ENCODE measurements at regions of chr3 and their contacts with region 1.

Region 1: DNA sequence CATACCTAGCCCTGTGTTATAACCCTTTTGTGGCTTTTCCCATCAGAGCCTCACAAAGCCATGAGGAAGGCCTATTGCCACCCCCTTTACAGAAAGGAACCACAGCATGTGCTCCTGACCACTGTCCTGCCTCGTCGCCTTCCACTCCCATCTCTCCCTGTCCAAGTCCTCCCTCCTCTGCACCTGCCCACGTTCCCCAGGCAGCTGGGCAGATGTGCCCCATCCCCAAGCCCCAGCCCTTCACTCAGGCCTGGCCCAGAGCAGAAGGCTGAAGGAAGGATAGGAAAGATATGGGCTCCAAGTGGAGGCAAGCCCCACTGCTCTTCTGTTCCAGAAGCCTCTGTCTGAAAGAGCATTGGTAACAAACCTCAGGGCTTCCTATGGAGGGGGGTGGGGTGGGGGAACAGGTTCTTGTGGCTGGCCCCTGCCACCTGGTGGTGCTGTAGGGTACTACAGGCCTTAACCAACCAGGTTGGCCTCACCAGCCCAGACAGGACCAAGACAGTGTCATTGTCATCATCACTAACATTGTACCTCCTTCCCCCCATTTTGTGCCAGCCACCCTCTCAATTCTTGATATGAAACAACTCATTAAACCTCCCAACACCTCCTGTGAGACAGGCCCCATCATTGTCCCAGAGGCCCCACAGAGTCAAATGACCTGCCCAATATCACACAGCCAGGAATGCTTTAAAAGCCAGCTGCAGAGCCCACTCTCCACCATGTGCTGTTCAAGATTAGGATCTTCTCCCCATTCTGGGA is 10.0 kb downstream of the POC1A start:
- DNase-seq: peak; percentile 70 to 88 (median 82)
- ATAC-seq: peak; percentile 98
- H3K4me3 ChIP-seq: no peak overlapping the region
- H3K4me3 Mint-ChIP-seq: peak overlapping the region in 1 of 10 donors; percentile 6
- H3K27ac ChIP-seq: no peak overlapping the region
- H3K27ac Mint-ChIP-seq: peak overlapping the region in 5 of 9 donors; percentile 38 to 80 (median 64)
- H3K4me1 ChIP-seq: peaks cover 5 to 6% of the 10 kb centered on the region in 2 donors
- H3K4me1 Mint-ChIP-seq: peaks cover 5 to 10% (median 7%) of the 10 kb centered on the region in 7 donors
- H3K27me3 ChIP-seq: no peaks in the 10 kb centered on the region
- H3K27me3 Mint-ChIP-seq: no peaks in the 10 kb centered on the region

Region 2: DNA sequence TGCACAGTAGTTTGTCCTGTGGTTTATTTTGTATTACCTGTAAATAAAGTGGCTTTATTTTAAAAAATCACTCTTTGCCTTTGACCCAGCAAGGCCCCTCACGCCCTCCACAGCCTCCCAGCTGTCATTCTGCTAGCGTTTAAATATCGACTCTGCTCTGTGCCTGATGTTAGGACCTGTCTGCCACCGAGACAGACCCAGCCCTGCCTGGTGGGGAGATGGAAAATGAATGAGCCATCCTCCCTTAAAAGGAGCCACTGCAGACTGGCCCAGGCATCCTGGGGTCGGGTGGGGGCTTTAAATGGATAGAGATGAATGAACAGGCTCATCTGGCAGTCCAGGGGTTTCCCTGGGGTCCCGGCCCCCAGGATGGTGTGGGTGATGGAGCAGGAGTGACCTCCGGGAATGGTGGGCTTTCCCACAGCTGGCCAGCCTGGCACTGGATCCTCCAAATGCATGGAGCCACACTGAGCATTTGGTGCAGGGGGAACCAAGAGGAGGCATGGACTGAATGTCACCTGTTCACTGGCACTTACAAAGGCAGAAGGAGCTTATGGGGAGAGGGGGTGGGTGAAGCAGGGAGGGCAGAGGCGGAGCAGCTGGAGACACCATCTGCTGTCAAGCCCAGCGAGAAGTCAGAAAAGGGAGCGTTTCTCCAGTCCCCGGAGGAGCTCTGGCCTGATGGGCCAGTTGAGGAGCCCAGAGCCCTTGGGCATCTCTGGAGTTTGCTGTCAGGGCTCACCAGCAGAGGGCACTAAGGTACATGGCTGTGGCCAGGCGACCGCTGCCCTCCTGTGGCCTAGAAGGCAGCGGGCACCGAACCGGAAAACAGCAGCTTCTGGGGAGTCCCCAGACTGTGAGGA is 425.4 kb before region 1 on chr3:
- CTCF ChIA-PET with region 1: no interaction called
- POLR2A ChIA-PET with region 1: no interaction called
- intact Hi-C with region 1: loop called in 1 of 2 experiments (anchors 10 kb)
- DNase-seq: peak in 4 of 9 donors; percentile 6 to 71 (median 16)
- ATAC-seq: peak; percentile 84
- H3K4me3 ChIP-seq: no peak overlapping the region
- H3K4me3 Mint-ChIP-seq: no peak overlapping the region
- H3K27ac ChIP-seq: no peak overlapping the region
- H3K27ac Mint-ChIP-seq: peak overlapping the region in 3 of 9 donors; percentile 17 to 59 (median 18)
- H3K4me1 ChIP-seq: peaks cover 14 to 20% of the 10 kb centered on the region in 2 donors
- H3K4me1 Mint-ChIP-seq: peaks cover 21 to 40% (median 35%) of the 10 kb centered on the region in 7 donors
- H3K27me3 ChIP-seq: no peaks in the 10 kb centered on the region
- H3K27me3 Mint-ChIP-seq: no peaks in the 10 kb centered on the region

Region 3: DNA sequence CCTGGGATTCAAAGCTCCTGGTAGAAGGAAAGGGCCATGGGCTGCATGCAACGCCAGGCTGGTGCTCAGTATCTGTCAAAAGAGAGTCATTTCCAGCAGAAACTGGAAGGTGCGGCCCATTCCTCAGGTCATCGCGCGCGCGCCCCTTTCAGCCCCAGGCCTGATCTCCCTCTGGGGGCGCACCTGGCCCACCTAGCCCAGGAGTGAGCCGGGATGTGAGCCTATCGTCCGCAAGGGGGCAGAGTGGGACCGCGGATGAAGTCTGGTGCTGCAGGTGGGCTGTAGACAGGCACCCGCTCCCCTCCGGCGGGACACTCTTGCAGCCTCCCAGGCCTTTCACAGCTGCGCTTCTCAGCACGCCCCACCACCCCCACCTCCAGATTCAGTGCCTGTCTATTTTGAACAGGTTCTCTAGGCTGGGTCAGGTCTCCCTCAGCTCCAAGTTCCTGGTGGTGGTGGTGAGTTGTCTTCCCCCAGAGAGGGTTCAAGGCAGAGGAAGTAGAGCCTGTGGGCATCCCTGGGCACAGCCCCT is 142.7 kb before region 1 on chr3:
- CTCF ChIA-PET with region 1: interaction called, 33 read pairs
- POLR2A ChIA-PET with region 1: interaction called, 7 read pairs
- intact Hi-C with region 1: loop called (anchors 1 kb)
- DNase-seq: peak; percentile 73 to 86 (median 81)
- ATAC-seq: peak; percentile 98
- H3K4me3 ChIP-seq: no peak overlapping the region
- H3K4me3 Mint-ChIP-seq: peak overlapping the region in 2 of 10 donors; percentile 12 to 16
- H3K27ac ChIP-seq: no peak overlapping the region
- H3K27ac Mint-ChIP-seq: peak overlapping the region in 3 of 9 donors; percentile 8 to 41 (median 11)
- H3K4me1 ChIP-seq: peaks cover 6 to 22% of the 10 kb centered on the region in 2 donors
- H3K4me1 Mint-ChIP-seq: peaks cover 6 to 24% (median 16%) of the 10 kb centered on the region in 7 donors
- H3K27me3 ChIP-seq: no peaks in the 10 kb centered on the region
- H3K27me3 Mint-ChIP-seq: peaks cover 0 to 16% (median 0%) of the 10 kb centered on the region in 5 donors

Region 4: GRCh38 chr3:52041118-52041731 is 103.0 kb before region 1 on chr3:
- CTCF ChIA-PET with region 1: interaction called, 3 read pairs
- POLR2A ChIA-PET with region 1: no interaction called
- intact Hi-C with region 1: loop called in 1 of 2 experiments (anchors 1 kb)
- DNase-seq: no peak
- ATAC-seq: no peak
- H3K4me3 ChIP-seq: no peak overlapping the region
- H3K4me3 Mint-ChIP-seq: no peak overlapping the region
- H3K27ac ChIP-seq: no peak overlapping the region
- H3K27ac Mint-ChIP-seq: peak overlapping the region in 3 of 9 donors; percentile 28 to 72 (median 41)
- H3K4me1 ChIP-seq: no peaks in the 10 kb centered on the region
- H3K4me1 Mint-ChIP-seq: peaks cover 0 to 34% (median 27%) of the 10 kb centered on the region in 7 donors
- H3K27me3 ChIP-seq: no peaks in the 10 kb centered on the region
- H3K27me3 Mint-ChIP-seq: peaks cover 0 to 9% (median 0%) of the 10 kb centered on the region in 5 donors

Region 5: GRCh38 chr3:52123106-52123725 is 21.0 kb before region 1 on chr3:
- CTCF ChIA-PET with region 1: interaction called, 4 read pairs
- POLR2A ChIA-PET with region 1: interaction called, 3 read pairs
- intact Hi-C with region 1: loop called (anchors 1 kb)
- DNase-seq: peak; percentile 51 to 84 (median 70)
- ATAC-seq: peak; percentile 86
- H3K4me3 ChIP-seq: no peak overlapping the region
- H3K4me3 Mint-ChIP-seq: no peak overlapping the region
- H3K27ac ChIP-seq: no peak overlapping the region
- H3K27ac Mint-ChIP-seq: no peak overlapping the region
- H3K4me1 ChIP-seq: no peaks in the 10 kb centered on the region
- H3K4me1 Mint-ChIP-seq: peaks cover 0 to 28% (median 0%) of the 10 kb centered on the region in 7 donors
- H3K27me3 ChIP-seq: no peaks in the 10 kb centered on the region
- H3K27me3 Mint-ChIP-seq: no peaks in the 10 kb centered on the region